Astrocyte of the cerebellum (primary cell): ENCODE measurements at regions of chr3 and their contacts with region 1.

Region 1: DNA sequence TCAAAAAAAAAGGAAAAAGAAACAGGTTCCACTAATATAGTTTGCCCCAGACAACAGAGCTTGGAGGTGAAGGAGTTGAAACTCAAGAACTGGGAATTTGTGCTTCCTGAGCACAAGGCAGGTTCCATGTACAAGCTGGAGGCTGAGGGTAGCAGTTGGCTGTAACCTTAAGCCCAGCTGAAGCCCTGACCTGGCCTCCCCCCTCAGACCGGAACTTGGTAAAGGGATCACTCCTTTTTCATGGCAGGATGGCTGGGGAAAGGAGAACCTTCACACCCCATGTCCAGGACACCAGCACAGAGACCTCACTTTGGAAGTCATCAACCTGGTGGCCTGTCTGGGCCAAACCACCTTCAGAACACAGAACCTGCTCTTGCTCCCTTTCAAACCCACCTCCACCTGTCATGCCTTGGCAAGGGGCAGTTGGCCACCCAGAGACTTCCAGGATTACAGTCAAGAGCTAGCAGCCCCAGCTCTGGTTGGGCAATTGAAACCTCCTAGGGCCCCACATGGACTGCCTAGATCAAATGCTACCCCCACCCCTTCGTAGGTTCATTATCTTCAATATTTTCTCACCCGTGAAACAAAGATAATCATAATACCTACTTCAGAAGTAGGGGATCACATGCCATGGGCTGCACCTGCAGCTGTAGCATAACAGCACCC is 3.5 kb downstream of the RPL29 start:
- DNase-seq: no peak
- H3K4me3 ChIP-seq: no peak overlapping the region
- CTCF ChIP-seq: no peak

Region 2: GRCh38 chr3:52090131-52090932 is 98.2 kb after region 1 on chr3:
- in situ Hi-C with region 1: loop called (anchors 5 kb)
- DNase-seq: peak; percentile 96
- H3K4me3 ChIP-seq: no peak overlapping the region
- CTCF ChIP-seq: no peak

Region 3: DNA sequence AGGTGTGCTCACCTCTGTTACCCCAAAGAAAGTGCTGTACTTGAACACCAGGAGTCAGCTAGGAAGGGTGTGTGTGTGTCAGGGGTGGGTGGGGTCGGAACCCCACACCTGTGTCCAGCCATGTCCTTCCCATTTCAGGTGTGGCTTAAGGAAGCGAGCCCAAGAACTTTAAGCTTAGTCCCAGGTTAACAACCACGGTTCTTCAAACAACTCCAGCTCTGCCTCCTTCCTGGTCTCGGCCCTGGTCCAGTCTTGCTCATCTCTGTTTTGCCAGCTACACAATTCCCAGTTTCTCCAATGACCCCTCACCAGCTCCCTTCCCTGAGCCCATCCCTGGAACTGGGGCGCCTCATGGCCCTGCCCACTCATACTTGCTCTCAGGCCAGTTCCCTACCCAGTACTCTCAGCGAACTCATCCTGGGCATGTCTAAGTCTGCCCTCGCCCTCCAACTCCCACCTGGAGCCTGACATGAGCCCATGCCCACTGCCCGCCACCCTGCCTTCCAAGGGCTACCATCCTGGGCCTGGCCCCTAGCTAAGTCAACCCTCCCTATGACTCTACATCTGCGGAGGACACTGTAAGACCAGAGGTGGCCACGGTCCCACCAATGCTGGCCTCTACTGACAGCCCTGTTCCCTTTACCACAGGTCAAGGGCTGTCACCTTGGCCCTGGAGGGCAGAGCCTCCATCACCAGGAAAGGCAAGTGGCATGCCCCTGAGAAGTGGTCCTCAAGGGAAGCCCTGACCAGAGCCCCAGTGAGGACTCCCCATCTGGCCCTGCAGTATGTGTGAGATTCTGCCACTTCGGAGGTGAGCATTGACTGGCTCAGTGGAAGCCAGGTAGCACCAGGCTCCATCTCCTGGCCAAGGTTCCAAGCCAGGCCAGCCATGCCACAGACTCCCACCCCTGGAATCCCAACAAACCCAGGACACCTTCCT is 152.9 kb after region 1 on chr3:
- in situ Hi-C with region 1: loop called (anchors 5 kb)
- DNase-seq: no peak
- H3K4me3 ChIP-seq: no peak overlapping the region
- CTCF ChIP-seq: no peak